ENCODE measurements at regions of chr20 and their contacts with region 1.

Region 1: DNA sequence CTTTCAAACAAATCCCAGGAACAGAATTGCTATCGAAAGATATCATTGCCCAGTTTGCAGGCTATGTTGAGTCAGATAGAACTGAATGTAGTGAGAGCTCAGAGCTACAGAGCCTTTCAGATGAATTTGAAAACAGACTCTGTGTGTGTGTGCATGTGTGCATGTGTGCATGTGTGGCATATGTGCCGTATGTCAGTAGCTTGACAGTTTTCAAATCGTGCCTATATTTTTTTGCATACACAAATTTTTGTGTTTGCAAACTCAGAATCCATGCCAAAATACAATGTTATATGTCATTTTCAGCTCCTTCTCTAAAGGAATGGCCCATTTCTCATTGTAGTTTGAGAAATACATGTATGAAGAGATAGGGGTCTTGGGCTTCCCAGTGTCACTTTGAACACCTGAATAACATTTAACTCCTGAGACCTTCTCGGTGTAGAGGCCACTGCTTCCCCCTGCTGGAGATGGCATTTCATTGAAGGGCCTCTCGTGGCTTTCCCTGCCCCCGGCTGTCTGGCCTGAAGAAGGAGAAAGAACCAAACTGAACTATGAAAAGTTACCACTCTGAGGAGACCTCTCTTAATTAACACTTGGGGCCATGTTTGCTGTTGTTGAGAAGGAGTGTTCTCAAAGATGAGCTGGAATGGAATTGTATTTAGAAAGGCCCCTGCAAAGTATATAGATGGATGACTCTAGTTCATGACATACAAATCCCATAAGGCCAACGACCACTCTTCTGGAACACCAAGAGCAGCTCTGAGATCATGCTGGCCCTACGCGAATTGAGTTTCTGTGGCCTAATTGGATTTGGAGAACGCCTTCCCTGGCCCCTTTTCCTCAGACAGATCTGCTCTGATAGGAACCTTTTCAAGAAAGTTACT is 58.7 kb downstream of the VAPB start:
- DNase-seq: peak; percentile 30
- ATAC-seq: peak; percentile 93
- H3K4me3 ChIP-seq: no peak overlapping the region
- H3K27ac ChIP-seq: no peak overlapping the region
- H3K4me1 ChIP-seq: no peaks in the 10 kb centered on the region
- H3K27me3 ChIP-seq: no peaks in the 10 kb centered on the region
- CTCF ChIP-seq: peak; percentile 84

Region 2: DNA sequence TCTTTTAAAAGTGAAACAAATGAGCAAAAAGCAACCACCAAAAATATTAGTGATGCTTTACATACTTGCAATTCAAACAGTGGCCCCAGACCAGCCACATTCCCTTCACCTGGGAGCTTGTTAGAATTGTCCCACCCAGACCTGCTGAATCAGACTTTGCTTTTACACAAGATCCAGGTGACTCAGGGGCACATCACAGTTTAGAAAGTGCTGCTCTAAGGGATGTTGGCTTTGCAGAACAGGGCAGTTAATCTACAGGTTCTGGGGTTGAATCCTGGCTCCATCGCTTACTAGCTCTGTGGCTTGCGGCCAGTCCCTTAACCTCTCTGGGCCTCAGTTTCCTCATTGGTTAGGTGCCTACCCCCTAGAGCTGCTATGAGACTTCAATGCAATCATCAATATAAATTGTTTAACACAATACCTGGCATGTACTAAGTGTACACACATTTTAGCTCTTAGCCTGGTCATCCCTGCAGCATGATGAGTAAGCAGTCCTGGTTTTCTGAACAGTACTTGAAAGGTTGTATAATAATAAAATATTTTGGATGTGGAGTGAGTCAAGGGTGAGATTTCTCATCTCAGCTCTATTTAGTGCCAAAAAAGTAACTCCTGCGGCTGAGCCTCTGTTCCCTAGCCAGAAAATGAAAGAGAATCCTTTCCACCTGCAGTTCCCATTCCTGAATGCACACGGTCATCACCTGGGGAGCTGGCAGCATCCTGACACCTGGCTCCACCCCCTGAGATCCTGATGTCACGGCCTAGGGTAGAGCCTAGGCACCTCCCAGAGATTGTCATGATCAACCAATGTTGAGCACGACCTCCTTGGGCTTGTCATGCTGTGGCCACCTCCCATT is 382.0 kb before region 1 on chr20:
- CTCF ChIA-PET with region 1: no interaction called
- POLR2A ChIA-PET with region 1: no interaction called
- in situ Hi-C with region 1: no loop called
- intact Hi-C with region 1: no loop called
- DNase-seq: no peak
- ATAC-seq: no peak; the same call in 1 of the 2 replicates
- H3K4me3 ChIP-seq: no peak overlapping the region
- H3K27ac ChIP-seq: no peak overlapping the region
- H3K4me1 ChIP-seq: no peaks in the 10 kb centered on the region
- H3K27me3 ChIP-seq: no peaks in the 10 kb centered on the region
- CTCF ChIP-seq: no peak

Region 3: GRCh38 chr20:58236612-58237330 is 211.0 kb before region 1 on chr20:
- CTCF ChIA-PET with region 1: no interaction called
- POLR2A ChIA-PET with region 1: no interaction called
- in situ Hi-C with region 1: no loop called
- intact Hi-C with region 1: loop called (anchors 10 kb)
- DNase-seq: peak; percentile 47
- ATAC-seq: peak; percentile 95
- H3K4me3 ChIP-seq: peak overlapping the region; percentile 47 to 69
- H3K27ac ChIP-seq: peak overlapping the region; percentile 67
- H3K4me1 ChIP-seq: peaks cover 6% of the 10 kb centered on the region
- H3K27me3 ChIP-seq: no peaks in the 10 kb centered on the region
- CTCF ChIP-seq: peak; percentile 97

Region 4: DNA sequence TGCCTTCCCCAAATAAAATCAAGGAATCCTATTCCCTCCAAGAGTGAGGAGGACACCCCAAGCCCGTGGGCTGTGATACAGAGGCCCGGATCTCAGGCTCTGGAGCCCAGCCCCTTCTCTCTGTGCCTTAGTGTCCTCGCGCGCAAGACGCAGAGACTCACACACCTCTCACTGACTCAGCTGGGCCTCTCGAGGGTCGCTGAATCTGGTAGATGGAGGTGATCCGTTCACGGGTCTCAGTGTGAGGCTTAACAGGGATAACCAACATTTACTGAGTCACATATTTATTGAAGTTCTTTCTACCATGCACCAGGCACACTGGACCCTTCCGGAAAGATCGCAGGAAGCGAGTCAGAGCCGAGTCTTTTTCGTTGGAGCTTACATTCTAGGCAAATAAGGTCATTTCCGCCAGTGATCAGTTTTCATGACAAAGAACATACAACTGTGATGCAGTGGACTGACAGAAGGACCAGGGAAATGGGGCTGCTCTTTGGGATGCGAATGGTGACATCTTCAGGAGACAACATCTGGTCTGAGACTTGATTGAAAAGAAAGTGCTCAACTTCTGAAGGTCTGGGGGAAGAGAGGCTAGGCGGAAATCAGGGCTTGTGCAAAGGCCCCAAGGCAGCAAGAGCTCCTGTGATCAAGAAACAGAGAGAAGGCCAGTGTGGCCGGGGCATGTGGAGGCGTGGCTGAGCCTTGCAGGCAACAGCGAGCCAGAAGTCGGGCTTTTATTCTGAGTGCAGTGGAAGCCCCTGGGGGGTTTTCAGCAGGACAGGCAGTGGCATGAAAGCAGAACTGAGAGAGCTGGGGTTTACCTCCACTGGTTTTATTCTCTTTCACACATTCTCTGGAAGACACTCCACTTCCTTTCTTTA is 10.7 kb after region 1 on chr20:
- CTCF ChIA-PET with region 1: no interaction called
- POLR2A ChIA-PET with region 1: no interaction called
- in situ Hi-C with region 1: no loop called
- intact Hi-C with region 1: no loop called
- DNase-seq: no peak
- ATAC-seq: no peak
- H3K4me3 ChIP-seq: no peak overlapping the region
- H3K27ac ChIP-seq: no peak overlapping the region
- H3K4me1 ChIP-seq: no peaks in the 10 kb centered on the region
- H3K27me3 ChIP-seq: no peaks in the 10 kb centered on the region
- CTCF ChIP-seq: no peak

Region 5: DNA sequence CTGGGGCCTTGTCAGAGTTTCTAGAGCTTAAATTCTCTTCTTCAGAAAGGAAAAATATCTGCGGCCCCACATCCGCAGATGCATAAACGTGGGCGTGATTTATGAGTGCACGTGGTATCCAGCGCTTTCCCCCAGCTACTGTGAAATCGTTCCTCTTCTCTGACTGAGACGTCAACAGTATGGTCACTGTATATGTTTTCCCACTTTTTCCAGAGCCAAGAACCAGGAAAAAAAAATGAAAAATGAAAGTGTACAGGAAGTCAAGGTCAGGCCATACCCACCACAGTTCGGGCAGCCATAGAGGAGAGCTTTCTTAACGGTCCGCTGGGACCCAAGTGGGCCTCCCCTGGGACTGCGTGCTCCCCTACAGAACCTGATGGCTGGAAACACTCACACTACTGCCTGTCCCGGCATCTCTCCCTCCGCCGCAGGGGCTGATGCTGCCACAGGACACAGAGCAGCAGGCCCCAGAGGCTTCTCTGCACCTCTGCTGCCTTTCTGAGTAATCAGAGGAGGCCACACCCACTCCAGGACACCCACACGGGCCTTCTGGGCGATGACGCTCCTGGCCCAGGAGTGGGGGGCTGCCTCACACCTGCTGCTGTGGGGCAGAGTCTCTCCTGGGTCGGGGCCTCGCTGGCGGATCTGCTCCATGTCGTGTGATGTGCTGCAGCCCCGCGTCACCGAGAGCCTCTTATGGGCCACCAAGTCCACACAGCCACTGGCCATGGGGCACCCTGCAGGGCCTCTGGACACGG is 186.9 kb after region 1 on chr20:
- CTCF ChIA-PET with region 1: no interaction called
- POLR2A ChIA-PET with region 1: no interaction called
- in situ Hi-C with region 1: no loop called
- intact Hi-C with region 1: no loop called
- DNase-seq: no peak
- ATAC-seq: no peak
- H3K4me3 ChIP-seq: no peak overlapping the region
- H3K27ac ChIP-seq: no peak overlapping the region
- H3K4me1 ChIP-seq: peaks cover 4% of the 10 kb centered on the region; the same call in 1 of the 2 replicates
- H3K27me3 ChIP-seq: no peaks in the 10 kb centered on the region
- CTCF ChIP-seq: no peak

Region 6: GRCh38 chr20:58778303-58778702 is 330.6 kb after region 1 on chr20:
- CTCF ChIA-PET with region 1: interaction called, 14 read pairs
- POLR2A ChIA-PET with region 1: no interaction called
- in situ Hi-C with region 1: no loop called
- intact Hi-C with region 1: no loop called
- DNase-seq: no peak
- ATAC-seq: no peak
- H3K4me3 ChIP-seq: no peak overlapping the region
- H3K27ac ChIP-seq: no peak overlapping the region
- H3K4me1 ChIP-seq: no peaks in the 10 kb centered on the region
- H3K27me3 ChIP-seq: peaks cover 32% of the 10 kb centered on the region
- CTCF ChIP-seq: no peak

Measured in Panc1 (cell line).